Right cardiac atrium (tissue), 5 donors: ENCODE measurements at regions of chr1 and their contacts with region 1.

Region 1: DNA sequence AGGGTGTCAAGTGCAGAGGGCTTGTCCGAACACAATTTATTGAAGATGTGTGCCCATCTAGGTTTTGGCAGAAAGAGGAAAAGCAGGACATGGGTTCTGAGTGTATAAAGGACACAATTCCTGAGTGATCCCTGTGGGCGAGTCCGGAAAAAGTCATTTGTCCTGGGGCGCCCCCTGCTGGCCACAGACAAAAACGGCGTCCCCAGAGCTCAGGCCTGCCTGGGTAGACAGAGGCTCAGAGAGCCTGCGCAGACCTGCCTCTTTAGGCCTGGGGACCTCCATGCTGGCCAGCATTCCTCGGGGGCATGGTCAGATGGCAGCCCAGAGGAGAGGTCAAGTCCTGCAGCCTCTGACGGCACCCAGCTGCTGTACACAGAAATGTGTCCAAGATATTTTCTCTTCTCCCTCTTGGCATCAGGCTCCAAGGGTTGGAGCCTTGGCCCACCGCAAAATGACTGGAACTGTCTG is 65.5 kb upstream of the LRP8 start:
- DNase-seq: peak; percentile 78 to 90 (median 89)
- ATAC-seq: peak; percentile 82 to 89
- H3K4me3 ChIP-seq: no peak overlapping the region
- H3K27ac ChIP-seq: no peak overlapping the region
- H3K4me1 ChIP-seq: no peaks in the 10 kb centered on the region
- H3K27me3 ChIP-seq: no peaks in the 10 kb centered on the region

Region 2: DNA sequence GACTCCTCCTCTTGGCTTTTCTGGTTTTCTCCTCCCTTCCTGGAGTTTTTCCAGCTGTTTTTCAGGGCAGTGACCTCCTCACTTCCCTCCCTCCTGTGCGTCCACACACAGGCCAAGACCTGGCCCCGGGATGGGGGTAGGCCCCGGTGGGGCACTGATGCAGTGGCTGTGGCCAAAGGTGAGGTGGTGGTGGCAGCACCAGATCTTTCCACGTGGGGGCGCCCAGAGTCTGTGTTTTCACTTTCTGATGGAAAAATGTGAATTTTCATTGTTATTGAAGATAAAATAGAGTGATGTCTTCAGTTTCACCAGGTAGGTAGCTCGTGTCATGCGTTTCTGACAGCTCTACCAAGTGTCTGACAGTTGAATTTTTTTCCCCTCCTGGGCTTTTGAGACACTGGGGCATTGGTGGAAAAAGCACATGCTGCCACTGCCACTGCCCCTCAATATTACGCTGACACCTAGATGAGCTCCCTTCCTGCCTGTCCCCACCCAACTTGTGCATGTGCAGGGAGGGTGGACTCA is 115.1 kb before region 1 on chr1:
- intact Hi-C with region 1: loop called (anchors 1 to 2 kb)
- DNase-seq: peak; percentile 54 to 84 (median 78)
- ATAC-seq: peak in 1 of 2 donors; percentile 55
- H3K4me3 ChIP-seq: no peak overlapping the region
- H3K27ac ChIP-seq: no peak overlapping the region
- H3K4me1 ChIP-seq: no peaks in the 10 kb centered on the region
- H3K27me3 ChIP-seq: no peaks in the 10 kb centered on the region

Region 3: DNA sequence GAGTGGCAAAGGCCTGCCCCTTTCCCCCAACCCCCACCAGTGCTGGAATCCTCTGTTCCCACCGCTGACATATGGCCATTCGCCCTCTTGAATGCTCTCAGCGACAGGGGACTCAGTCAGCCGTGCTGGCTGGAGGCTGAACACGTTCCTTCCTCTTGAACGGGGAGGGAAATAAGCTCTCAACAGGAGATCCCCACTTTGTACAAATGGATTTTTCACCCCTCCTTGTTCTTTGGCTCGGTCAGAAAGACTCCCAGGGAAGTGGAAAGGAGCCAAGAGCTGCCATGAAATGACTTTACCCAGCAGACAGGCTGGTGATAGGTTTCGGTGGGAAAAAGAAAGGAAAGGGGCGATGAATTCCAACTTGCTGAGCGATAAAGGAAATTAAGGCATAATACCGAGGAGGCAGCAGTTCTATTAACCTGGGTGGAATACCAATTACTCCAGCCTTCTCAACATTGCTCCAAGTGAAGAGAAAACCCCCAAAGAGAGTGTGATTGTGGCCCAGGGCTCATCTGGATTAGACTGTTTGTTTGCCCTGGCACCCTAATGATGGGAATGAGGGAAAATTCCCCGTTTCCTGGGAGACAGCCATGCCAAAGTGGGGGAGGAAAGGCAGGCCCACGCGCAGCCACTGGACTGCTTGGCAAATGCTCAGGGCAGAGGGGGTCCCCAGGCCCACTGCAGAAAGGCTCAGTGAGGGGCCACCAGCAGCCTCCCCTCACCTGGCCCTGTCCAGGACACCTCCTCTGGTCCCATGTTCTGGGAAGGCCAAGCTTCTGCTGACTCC is 89.4 kb before region 1 on chr1:
- intact Hi-C with region 1: no loop called
- DNase-seq: no peak
- ATAC-seq: no peak
- H3K4me3 ChIP-seq: no peak overlapping the region
- H3K27ac ChIP-seq: no peak overlapping the region
- H3K4me1 ChIP-seq: no peaks in the 10 kb centered on the region
- H3K27me3 ChIP-seq: no peaks in the 10 kb centered on the region